Activated CD8-positive, alpha-beta T cell treated with anti-CD3 and anti-CD28 coated beads, Interleukin-2, amount 10 ng/mL, durations not matched to agents 7 days and 5 days (primary cell): ENCODE measurements at regions of chr1 and their contacts with region 1.

Region 1: DNA sequence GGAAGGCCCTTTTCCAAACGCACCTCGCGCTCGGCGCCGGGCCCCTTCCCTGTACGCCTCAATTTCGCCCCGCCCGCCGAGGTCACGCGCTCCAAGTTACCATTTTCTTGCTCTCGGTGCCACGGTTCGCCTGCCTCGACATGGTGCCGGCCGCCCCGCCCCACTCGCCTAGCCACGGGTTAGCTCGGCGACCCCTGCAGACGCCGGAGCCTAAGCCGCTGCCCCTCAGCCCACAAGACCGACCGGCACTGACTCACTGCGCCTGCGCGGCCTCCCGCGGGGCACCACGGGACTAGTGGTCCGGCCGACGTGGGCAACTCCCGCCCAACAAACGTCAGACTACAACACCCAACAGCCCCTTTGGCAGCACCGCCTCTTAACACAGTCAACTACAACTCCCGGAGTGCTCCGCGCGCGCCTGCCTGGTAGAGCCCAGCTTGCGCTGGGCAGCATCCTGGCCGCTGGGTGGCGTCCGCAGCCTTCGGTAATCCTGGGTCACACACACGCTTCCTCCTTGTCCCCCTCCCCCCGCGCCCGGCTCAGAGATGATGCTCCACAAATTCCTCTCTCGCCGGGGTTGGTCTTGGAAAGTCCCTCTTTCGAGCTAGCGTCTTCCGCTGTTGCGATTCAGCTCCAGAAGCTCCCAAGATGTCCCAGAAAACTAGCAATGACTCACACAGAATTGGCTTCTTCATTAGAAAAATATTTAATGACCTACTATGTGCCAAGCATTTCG is at the start of gene TRAPPC3:
- DNase-seq: peak; percentile 100
- ATAC-seq: peak; percentile 94
- H3K4me3 Mint-ChIP-seq: peak within 1 kb of the TSS; percentile 97
- H3K27ac Mint-ChIP-seq: peak within 1 kb of the TSS; percentile 97
- H3K4me1 Mint-ChIP-seq: peaks cover 74% of the 10 kb centered on the region
- H3K27me3 Mint-ChIP-seq: no peaks in the 10 kb centered on the region
- total RNA-seq, gene TRAPPC3: 55.6 to 56.4 TPM

Region 2: GRCh38 chr1:35962952-35963351 is 186.5 kb before region 1 on chr1:
- CTCF ChIA-PET with region 1: no interaction called
- POLR2A ChIA-PET with region 1: no interaction called
- DNase-seq: no peak
- ATAC-seq: no peak
- H3K4me3 Mint-ChIP-seq: no peak overlapping the region
- H3K27ac Mint-ChIP-seq: no peak overlapping the region
- H3K4me1 Mint-ChIP-seq: peaks cover 4% of the 10 kb centered on the region
- H3K27me3 Mint-ChIP-seq: no peaks in the 10 kb centered on the region

Region 3: GRCh38 chr1:36134505-36135329 is 14.7 kb before region 1 on chr1:
- CTCF ChIA-PET with region 1: interaction called, 28 read pairs
- POLR2A ChIA-PET with region 1: interaction called, 4 read pairs
- DNase-seq: peak; percentile 66
- ATAC-seq: peak; percentile 78
- H3K4me3 Mint-ChIP-seq: no peak overlapping the region
- H3K27ac Mint-ChIP-seq: peak overlapping the region; percentile 9
- H3K4me1 Mint-ChIP-seq: peaks cover 9% of the 10 kb centered on the region
- H3K27me3 Mint-ChIP-seq: no peaks in the 10 kb centered on the region

Region 4: DNA sequence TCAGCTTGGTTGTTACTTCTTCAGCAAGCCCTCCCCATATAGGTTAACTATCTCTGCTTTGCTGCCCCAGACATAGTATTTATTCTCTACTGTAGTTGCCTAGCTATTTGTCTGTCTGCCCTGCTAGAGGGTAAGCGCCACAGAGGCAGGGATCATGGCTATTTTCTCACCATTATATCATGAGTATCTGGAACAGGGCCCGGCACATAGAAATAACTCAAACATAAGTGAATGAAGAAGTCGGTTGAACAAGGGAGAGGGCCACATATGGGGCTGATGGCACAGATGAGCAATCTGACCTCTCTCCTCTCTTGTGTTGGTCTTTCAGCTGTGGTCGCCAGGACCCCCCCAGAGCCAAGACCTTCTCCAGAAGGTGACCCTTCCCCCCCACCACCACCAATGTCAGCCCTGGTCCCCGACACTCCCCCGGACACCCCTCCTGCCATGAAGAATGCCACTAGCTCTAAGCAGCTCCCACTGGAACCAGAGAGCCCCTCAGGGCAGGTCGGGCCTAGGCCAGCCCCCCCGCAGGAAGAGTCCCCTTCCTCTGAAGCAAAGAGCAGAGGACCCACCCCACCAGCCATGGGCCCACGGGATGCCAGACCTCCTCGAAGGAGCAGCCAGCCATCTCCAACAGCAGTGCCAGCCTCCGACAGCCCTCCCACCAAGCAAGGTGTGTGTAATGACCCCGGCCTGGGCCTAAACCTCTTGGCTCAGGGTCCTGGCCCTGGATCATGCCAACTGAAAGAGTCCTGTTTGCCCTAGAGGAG is 21.4 kb after region 1 on chr1:
- CTCF ChIA-PET with region 1: interaction called, 16 read pairs
- POLR2A ChIA-PET with region 1: no interaction called
- DNase-seq: no peak
- ATAC-seq: no peak
- H3K4me3 Mint-ChIP-seq: no peak overlapping the region
- H3K27ac Mint-ChIP-seq: no peak overlapping the region
- H3K4me1 Mint-ChIP-seq: peaks cover 20% of the 10 kb centered on the region
- H3K27me3 Mint-ChIP-seq: no peaks in the 10 kb centered on the region

Region 5: DNA sequence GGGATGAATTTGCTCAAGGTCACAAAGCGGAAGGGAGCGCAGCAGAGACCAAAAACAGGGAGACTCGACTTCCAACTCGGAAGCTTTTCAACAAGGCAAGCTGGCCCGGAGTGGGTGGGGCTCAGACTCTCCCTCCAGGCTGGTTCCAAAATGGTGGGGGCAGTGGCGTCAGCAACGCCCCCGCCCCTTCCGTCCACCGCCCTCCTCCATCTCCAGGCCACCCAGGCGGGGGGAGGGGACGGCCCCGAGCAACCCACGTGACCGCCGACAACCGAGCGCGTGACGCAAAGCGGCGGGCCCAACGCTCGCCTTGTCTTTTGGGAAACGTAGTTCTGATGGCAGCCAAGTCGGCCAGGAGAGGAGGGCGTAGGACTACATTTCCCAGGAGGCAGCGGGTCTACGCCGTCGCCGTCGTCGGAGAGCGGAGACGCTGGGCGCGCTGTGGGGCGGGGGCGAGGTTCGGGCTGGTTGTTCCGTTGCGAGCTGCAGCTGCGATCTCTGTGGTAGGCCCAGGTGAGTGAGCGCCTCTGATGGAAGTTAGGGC is 74.7 kb after region 1 on chr1 and contains the start of gene THRAP3:
- CTCF ChIA-PET with region 1: interaction called, 52 read pairs
- POLR2A ChIA-PET with region 1: interaction called, 37 read pairs
- DNase-seq: peak; percentile 100
- ATAC-seq: peak; percentile 93
- H3K4me3 Mint-ChIP-seq: peak within 1 kb of the TSS; percentile 97
- H3K27ac Mint-ChIP-seq: peak within 1 kb of the TSS; percentile 100
- H3K4me1 Mint-ChIP-seq: peaks cover 32% of the 10 kb centered on the region
- H3K27me3 Mint-ChIP-seq: no peaks in the 10 kb centered on the region
- total RNA-seq, gene THRAP3: 136 to 140 TPM

Region 6: DNA sequence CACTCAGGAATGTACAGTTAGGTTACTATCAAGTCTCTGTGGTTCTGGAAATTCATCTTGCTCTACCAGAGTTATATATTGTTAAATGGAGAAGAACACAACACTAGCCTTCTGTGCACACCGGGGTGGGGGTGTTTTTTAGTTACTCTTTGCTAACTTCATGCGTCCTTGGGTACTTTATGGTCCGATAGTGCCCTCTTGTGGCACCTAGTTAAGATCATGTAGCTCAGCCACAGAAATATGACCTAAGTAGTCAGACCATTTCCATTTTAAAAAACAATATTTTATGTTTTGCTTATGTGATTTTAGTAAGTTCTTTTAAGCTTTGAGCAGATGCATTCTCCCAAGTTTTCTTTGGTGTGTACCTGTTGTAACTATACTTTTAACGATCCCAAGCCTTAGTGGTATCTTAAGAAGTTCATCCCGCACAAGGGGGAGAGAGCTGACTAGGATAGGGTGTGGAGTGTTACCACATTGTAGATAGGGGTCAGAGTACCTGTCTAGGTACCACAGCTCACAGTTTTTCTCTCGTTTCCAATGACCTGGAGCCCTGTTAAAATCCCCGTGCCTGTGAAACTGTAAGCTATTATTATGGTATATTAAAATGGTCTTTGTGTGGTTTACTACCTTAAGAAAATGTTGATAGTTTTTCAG is 136.2 kb after region 1 on chr1:
- CTCF ChIA-PET with region 1: interaction called, 77 read pairs
- POLR2A ChIA-PET with region 1: interaction called, 14 read pairs
- DNase-seq: peak; percentile 82
- ATAC-seq: peak; percentile 94
- H3K4me3 Mint-ChIP-seq: no peak overlapping the region
- H3K27ac Mint-ChIP-seq: peak overlapping the region; percentile 15
- H3K4me1 Mint-ChIP-seq: peaks cover 22% of the 10 kb centered on the region
- H3K27me3 Mint-ChIP-seq: no peaks in the 10 kb centered on the region

Region 7: DNA sequence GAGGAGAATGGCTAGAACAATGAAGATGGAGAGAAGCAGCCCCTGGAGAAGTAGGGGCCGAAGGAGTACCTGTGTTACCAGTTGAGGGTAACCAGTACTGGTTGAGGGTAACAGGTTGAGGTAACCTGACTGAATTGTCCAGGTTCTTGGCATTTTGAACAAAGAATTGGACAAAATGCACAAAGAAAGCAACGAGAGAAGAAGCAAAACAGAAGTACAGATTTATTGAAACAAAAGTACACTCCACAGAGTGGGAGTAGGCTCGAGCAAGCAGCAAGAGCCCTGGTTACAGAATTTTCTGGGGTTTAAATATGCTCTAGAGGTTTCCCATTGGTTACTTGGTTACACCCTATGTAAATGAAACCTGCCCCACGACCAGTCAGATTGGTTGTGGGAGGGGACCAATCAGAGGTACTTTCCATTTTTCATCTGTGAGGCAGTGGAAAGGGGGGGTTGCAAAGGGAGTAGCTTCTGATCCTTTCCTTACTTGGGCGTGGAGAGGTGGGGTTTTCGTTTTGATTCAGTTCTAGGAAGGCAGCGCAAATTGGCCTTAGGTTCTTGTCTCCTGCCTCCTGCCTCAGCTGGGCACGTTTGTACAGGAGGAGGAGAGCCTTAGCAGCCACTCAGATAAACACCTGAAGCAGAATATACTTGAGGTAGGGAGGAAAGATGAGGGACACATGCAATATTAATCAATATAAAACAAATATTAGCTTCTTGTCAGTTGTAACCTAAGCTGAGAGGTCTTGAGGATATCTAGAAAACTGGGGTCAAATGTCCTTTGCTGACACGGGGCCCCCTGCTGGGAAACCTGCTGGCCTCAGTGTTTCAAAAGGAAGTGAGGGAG is 262.5 kb after region 1 on chr1:
- CTCF ChIA-PET with region 1: interaction called, 10 read pairs
- POLR2A ChIA-PET with region 1: no interaction called
- DNase-seq: peak; percentile 75
- ATAC-seq: peak; percentile 94
- H3K4me3 Mint-ChIP-seq: peak overlapping the region; percentile 25
- H3K27ac Mint-ChIP-seq: peak overlapping the region; percentile 86
- H3K4me1 Mint-ChIP-seq: peaks cover 23% of the 10 kb centered on the region
- H3K27me3 Mint-ChIP-seq: peaks cover 2% of the 10 kb centered on the region